CD4-positive, alpha-beta memory T cell (primary cell): ENCODE measurements at regions of chr9 and their contacts with region 1.

Region 1: DNA sequence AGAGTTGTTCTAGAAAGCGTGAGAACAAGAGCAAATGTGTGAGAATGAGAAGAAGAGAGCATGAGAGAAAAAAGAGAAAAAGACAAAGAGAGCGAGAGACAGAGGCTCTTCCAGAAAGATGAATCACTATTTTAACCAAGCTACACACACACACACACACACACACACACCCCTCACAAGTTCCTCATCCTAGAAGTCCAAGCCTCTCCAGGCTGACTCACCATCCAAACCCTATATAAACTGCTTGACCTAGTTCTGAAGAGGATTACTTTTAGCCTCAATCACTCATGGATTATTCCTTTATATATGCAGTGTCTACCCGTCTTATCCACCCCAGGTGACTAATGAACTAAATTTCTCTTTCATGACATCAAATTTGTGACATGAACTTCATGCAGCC is 37.6 kb downstream of the C9orf57 start:
- DNase-seq: no peak
- H3K4me3 ChIP-seq: no peak overlapping the region
- H3K4me3 Mint-ChIP-seq: no peak overlapping the region
- H3K27ac ChIP-seq: no peak overlapping the region
- H3K27ac Mint-ChIP-seq: peak overlapping the region in 1 of 7 donors; percentile 27
- H3K4me1 ChIP-seq: no peaks in the 10 kb centered on the region
- H3K4me1 Mint-ChIP-seq: no peaks in the 10 kb centered on the region
- H3K27me3 ChIP-seq: no peaks in the 10 kb centered on the region
- H3K27me3 Mint-ChIP-seq: peaks cover 0 to 2% of the 10 kb centered on the region in 2 donors

Region 2: GRCh38 chr9:70924895-70925547 is 1097.8 kb before region 1 on chr9:
- CTCF ChIA-PET with region 1: no interaction called
- POLR2A ChIA-PET with region 1: no interaction called
- intact Hi-C with region 1: loop called (anchors 10 kb)
- DNase-seq: peak in 2 of 5 donors; percentile 0 to 2
- H3K4me3 ChIP-seq: no peak overlapping the region
- H3K4me3 Mint-ChIP-seq: no peak overlapping the region
- H3K27ac ChIP-seq: no peak overlapping the region
- H3K27ac Mint-ChIP-seq: no peak overlapping the region
- H3K4me1 ChIP-seq: no peaks in the 10 kb centered on the region
- H3K4me1 Mint-ChIP-seq: no peaks in the 10 kb centered on the region
- H3K27me3 ChIP-seq: no peaks in the 10 kb centered on the region
- H3K27me3 Mint-ChIP-seq: peaks cover 0 to 3% of the 10 kb centered on the region in 2 donors

Region 3: GRCh38 chr9:71604197-71605063 is 418.4 kb before region 1 on chr9:
- CTCF ChIA-PET with region 1: interaction called, 48 read pairs
- POLR2A ChIA-PET with region 1: interaction called, 4 read pairs
- intact Hi-C with region 1: loop called (anchors 1 kb)
- DNase-seq: peak; percentile 73 to 79 (median 75)
- H3K4me3 ChIP-seq: no peak overlapping the region
- H3K4me3 Mint-ChIP-seq: no peak overlapping the region
- H3K27ac ChIP-seq: no peak overlapping the region
- H3K27ac Mint-ChIP-seq: no peak overlapping the region
- H3K4me1 ChIP-seq: no peaks in the 10 kb centered on the region
- H3K4me1 Mint-ChIP-seq: no peaks in the 10 kb centered on the region
- H3K27me3 ChIP-seq: no peaks in the 10 kb centered on the region
- H3K27me3 Mint-ChIP-seq: no peaks in the 10 kb centered on the region

Region 4: GRCh38 chr9:71758785-71759184 is 264.1 kb before region 1 on chr9:
- CTCF ChIA-PET with region 1: interaction called, 4 read pairs
- POLR2A ChIA-PET with region 1: no interaction called
- intact Hi-C with region 1: loop called (anchors 2 kb)
- DNase-seq: peak in 3 of 5 donors; percentile 20 to 52 (median 32)
- H3K4me3 ChIP-seq: no peak overlapping the region
- H3K4me3 Mint-ChIP-seq: peak overlapping the region in 4 of 8 donors; percentile 7 to 31 (median 20)
- H3K27ac ChIP-seq: no peak overlapping the region
- H3K27ac Mint-ChIP-seq: peak overlapping the region in 1 of 7 donors; percentile 47
- H3K4me1 ChIP-seq: peaks cover 82% of the 10 kb centered on the region
- H3K4me1 Mint-ChIP-seq: peaks cover 66 to 83% (median 74%) of the 10 kb centered on the region in 4 donors
- H3K27me3 ChIP-seq: no peaks in the 10 kb centered on the region
- H3K27me3 Mint-ChIP-seq: no peaks in the 10 kb centered on the region

Region 5: DNA sequence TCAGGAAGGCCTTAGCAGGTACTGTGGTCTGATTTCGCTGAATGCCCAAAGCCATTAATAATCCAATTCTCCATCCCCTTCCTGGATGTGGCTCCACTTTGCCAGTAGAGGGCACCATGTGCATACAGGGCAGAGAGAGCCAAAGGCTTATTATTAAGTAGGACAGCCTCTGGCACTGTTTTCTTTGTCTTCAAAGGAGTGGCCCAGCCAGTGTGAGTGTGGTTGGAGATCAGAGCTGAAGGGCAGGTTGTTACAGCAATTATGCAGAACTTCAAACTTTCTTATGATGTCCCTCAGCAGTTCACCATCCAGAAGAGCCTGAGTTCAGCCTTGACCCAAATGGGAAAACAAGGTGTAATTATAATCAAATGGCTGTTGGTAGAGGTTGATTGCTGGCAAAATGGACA is 215.9 kb before region 1 on chr9:
- CTCF ChIA-PET with region 1: interaction called, 125 read pairs
- POLR2A ChIA-PET with region 1: interaction called, 3 read pairs
- intact Hi-C with region 1: loop called (anchors 1 kb)
- DNase-seq: peak; percentile 60 to 64 (median 63)
- H3K4me3 ChIP-seq: no peak overlapping the region
- H3K4me3 Mint-ChIP-seq: peak overlapping the region in 2 of 8 donors; percentile 18 to 32
- H3K27ac ChIP-seq: no peak overlapping the region
- H3K27ac Mint-ChIP-seq: peak overlapping the region in 6 of 7 donors; percentile 2 to 93 (median 54)
- H3K4me1 ChIP-seq: peaks cover 7% of the 10 kb centered on the region
- H3K4me1 Mint-ChIP-seq: peaks cover 5 to 7% (median 6%) of the 10 kb centered on the region in 4 donors
- H3K27me3 ChIP-seq: no peaks in the 10 kb centered on the region
- H3K27me3 Mint-ChIP-seq: no peaks in the 10 kb centered on the region

Region 6: DNA sequence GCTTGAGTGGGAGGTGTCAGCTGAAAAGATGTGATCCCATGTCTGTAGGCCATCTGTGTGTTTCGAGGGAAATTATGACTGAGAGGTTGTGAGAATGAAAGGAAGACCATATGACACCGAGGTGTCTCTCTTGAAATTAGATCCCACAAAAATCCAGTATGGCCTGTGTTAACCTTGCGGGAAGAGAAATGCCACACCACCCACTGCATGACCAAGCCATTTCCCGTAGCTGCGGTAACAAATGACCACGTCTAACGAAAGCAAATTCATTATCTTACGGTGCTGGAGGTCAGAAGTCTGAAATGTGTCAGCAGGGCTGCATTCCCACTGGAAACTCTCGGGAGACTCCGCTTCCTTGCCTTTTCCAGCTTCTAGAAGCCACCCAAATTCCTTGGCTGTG is 26.0 kb after region 1 on chr9:
- CTCF ChIA-PET with region 1: interaction called, 13 read pairs
- POLR2A ChIA-PET with region 1: no interaction called
- intact Hi-C with region 1: no loop called
- DNase-seq: no peak
- H3K4me3 ChIP-seq: no peak overlapping the region
- H3K4me3 Mint-ChIP-seq: no peak overlapping the region
- H3K27ac ChIP-seq: no peak overlapping the region
- H3K27ac Mint-ChIP-seq: no peak overlapping the region
- H3K4me1 ChIP-seq: no peaks in the 10 kb centered on the region
- H3K4me1 Mint-ChIP-seq: no peaks in the 10 kb centered on the region
- H3K27me3 ChIP-seq: no peaks in the 10 kb centered on the region
- H3K27me3 Mint-ChIP-seq: peaks cover 4 to 5% of the 10 kb centered on the region in 2 donors

Region 7: DNA sequence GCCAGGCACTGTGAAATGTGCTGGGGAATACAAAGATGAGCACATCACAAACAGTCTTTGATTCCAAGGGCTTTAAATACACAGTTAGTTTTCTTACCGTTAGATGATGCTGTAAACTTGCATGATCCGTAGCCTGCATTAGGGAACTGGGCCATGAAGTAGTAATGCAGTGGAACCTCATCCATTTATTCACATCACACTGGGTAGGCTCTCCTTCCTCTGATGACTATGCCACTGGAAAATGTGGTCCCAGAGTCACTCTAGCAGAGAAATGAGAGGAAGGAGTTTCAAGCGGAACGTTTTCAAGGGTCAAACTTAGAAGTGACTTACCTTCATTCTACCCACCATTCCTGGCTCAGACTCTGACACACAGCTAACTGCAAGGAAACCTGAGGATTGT is 315.8 kb after region 1 on chr9:
- CTCF ChIA-PET with region 1: no interaction called
- POLR2A ChIA-PET with region 1: no interaction called
- intact Hi-C with region 1: no loop called
- DNase-seq: no peak
- H3K4me3 ChIP-seq: no peak overlapping the region
- H3K4me3 Mint-ChIP-seq: no peak overlapping the region
- H3K27ac ChIP-seq: no peak overlapping the region
- H3K27ac Mint-ChIP-seq: no peak overlapping the region
- H3K4me1 ChIP-seq: no peaks in the 10 kb centered on the region
- H3K4me1 Mint-ChIP-seq: peaks cover 0 to 2% (median 0%) of the 10 kb centered on the region in 4 donors
- H3K27me3 ChIP-seq: no peaks in the 10 kb centered on the region
- H3K27me3 Mint-ChIP-seq: no peaks in the 10 kb centered on the region